Prostate gland (tissue), 2 donors: ENCODE measurements at regions of chr7 and their contacts with region 1.

Region 1: GRCh38 chr7:10973061-10973944 is at the start of gene PHF14:
- DNase-seq: peak; percentile 96
- H3K4me3 ChIP-seq: peak within 1 kb of the TSS; percentile 71 to 80
- H3K27ac ChIP-seq: peak within 1 kb of the TSS; percentile 79 to 85
- H3K4me1 ChIP-seq: no peaks in the 10 kb centered on the region
- H3K27me3 ChIP-seq: no peaks in the 10 kb centered on the region
- CTCF ChIP-seq: no peak
- POLR2A ChIP-seq: peak; percentile 77
- total RNA-seq, gene PHF14: 25.1 to 25.7 TPM

Region 2: DNA sequence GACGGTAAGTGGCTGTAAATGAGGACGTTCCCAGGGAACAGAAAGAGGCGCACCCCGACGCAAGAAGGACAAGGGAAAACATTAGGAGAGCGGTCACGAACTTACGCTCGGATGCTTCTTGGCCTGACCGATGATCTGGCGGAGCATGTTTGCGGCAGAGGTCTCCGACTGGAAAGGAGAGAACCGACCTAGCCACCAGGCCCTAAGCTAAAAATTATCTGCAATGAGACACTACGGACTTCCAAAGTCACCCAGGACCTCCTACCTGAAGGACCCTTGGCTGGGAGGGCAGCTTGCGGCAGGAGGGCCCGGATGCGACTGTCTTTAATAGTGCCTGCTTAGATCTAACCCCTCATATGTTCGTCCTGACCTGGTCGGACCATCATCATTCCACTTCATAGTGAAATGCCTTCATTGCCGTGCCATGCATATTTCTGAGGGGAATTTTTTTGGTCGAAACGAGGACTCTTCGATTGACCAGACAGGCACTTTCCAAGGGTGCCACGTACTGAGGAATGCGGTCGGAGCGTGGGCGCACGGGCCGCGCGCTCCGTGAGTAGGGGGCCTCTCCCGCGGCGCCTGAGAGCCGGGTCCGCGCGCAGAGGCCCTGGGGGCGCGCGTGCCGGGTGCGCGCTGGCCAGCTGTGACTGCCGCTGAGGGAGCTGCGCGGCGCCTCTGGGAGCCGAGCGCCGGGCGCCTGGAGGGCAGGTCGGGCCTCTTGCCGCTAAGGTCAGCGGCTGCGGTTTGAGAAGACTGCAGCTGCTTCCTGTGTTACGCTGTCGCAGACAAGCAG is 33.2 kb before region 1 on chr7:
- intact Hi-C with region 1: loop called (anchors 2 kb)
- DNase-seq: peak; percentile 86
- H3K4me3 ChIP-seq: peak overlapping the region; percentile 52 to 83
- H3K27ac ChIP-seq: peak overlapping the region; percentile 94 to 95
- H3K4me1 ChIP-seq: no peaks in the 10 kb centered on the region
- H3K27me3 ChIP-seq: no peaks in the 10 kb centered on the region
- CTCF ChIP-seq: no peak
- POLR2A ChIP-seq: peak; percentile 65

Region 3: GRCh38 chr7:11069591-11069990 is 96.3 kb after region 1 on chr7:
- intact Hi-C with region 1: no loop called
- DNase-seq: no peak
- H3K4me3 ChIP-seq: no peak overlapping the region
- H3K27ac ChIP-seq: no peak overlapping the region
- H3K4me1 ChIP-seq: no peaks in the 10 kb centered on the region
- H3K27me3 ChIP-seq: no peaks in the 10 kb centered on the region
- CTCF ChIP-seq: no peak
- POLR2A ChIP-seq: no peak